ENCODE measurements at regions of chr17 and their contacts with region 1.

Region 1: DNA sequence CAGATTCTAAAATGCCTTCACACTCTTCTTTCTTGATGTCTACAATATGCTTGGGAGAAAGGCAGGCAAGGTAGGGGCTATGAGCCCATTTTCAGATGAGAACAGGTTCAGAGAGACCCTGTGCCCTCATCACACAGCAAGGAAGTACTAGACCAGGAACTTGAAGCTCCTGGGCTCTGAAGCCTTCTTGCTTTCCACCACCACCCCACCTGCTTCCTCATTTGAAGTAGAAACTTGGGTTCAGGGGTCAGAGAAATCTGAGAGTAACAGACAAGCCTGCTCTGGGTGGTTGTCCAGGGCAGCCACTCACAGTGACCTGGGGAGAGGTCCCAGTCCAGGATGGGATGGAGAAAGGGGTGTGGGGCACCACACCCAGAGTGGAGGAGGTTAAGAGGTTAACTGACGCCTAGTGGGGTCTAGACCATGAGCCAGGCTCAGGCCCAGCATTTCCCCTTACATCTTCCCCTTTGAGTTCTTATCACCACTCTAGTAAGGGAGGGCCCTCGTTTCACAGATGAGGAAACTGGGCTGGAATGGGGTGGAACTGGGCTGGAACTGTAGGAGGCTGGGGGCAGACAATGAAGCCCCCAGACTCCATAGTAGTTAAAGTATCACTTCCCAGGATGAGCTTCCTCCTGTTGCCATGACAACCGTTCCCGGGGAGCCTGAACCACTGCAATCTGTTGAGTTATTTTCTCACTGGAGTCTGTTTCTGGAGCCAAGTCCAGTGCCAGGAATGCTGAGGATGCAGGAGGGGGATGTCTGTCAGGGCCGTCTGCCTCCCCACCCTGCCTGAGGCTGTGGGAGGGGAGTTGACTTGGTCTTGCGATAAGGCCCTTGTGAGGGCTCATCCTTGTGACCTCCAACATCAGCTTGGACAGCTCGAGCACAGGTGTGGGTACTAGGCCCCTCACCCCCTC is 16.2 kb upstream of the PHF12 start:
- DNase-seq: no peak
- H3K4me3 ChIP-seq: no peak overlapping the region
- H3K4me3 Mint-ChIP-seq: no peak overlapping the region
- H3K27ac Mint-ChIP-seq: no peak overlapping the region
- H3K4me1 ChIP-seq: peaks cover 8% of the 10 kb centered on the region; the same call in 1 of the 2 replicates
- H3K4me1 Mint-ChIP-seq: peaks cover 7% of the 10 kb centered on the region
- H3K27me3 ChIP-seq: no peaks in the 10 kb centered on the region
- H3K27me3 Mint-ChIP-seq: peaks cover 4% of the 10 kb centered on the region
- CTCF ChIP-seq: no peak

Region 2: GRCh38 chr17:29089601-29090044 is 122.1 kb after region 1 on chr17:
- CTCF ChIA-PET with region 1: interaction called, 24 read pairs
- POLR2A ChIA-PET with region 1: no interaction called
- intact Hi-C with region 1: no loop called
- DNase-seq: no peak
- H3K4me3 ChIP-seq: no peak overlapping the region
- H3K4me3 Mint-ChIP-seq: no peak overlapping the region
- H3K27ac Mint-ChIP-seq: no peak overlapping the region
- H3K4me1 ChIP-seq: no peaks in the 10 kb centered on the region
- H3K4me1 Mint-ChIP-seq: no peaks in the 10 kb centered on the region
- H3K27me3 ChIP-seq: no peaks in the 10 kb centered on the region
- H3K27me3 Mint-ChIP-seq: no peaks in the 10 kb centered on the region
- CTCF ChIP-seq: no peak

Region 3: DNA sequence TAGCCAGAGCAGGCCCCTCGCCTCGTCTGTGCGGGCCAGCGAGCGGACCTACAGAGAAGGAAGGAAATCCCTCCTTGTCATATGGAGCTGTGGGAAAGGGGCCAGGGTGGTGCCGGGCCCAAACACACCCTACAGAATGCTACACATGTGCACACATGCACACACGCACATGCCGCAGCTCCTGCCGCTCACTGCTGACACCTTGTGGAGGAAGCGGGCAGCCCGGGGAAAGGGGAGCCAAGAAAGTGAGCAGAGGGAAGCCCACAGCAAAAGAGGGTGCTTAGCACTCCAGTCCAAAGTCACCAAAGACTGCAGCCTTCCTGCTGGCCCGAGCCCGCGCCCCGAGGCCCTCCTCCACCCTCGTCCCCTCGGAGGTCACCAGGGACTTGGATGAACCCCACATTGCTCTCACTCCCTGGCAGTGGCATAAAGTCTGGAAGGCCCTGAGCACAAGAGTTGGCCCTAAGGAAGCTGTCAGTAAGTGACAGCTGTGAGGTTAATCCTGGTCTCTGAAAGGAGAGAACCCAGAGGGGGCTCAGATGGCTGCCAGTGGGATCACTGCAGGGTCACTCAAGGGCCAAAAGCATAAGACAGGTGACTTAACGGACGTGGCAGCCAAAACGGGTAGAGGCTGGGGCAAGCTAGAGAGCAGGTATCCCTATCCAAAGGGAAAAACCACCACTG is 144.5 kb after region 1 on chr17:
- CTCF ChIA-PET with region 1: interaction called, 261 read pairs
- POLR2A ChIA-PET with region 1: interaction called, 11 read pairs
- intact Hi-C with region 1: loop called (anchors 1 kb)
- DNase-seq: peak; percentile 65 to 84
- H3K4me3 ChIP-seq: no peak overlapping the region
- H3K4me3 Mint-ChIP-seq: no peak overlapping the region
- H3K27ac Mint-ChIP-seq: no peak overlapping the region
- H3K4me1 ChIP-seq: peaks cover 9% of the 10 kb centered on the region
- H3K4me1 Mint-ChIP-seq: no peaks in the 10 kb centered on the region
- H3K27me3 ChIP-seq: no peaks in the 10 kb centered on the region
- H3K27me3 Mint-ChIP-seq: no peaks in the 10 kb centered on the region
- CTCF ChIP-seq: peak; percentile 86 to 98

Region 4: GRCh38 chr17:29116804-29117772 is 149.6 kb after region 1 on chr17:
- CTCF ChIA-PET with region 1: interaction called, 261 read pairs
- POLR2A ChIA-PET with region 1: interaction called, 11 read pairs
- intact Hi-C with region 1: no loop called
- DNase-seq: peak; percentile 71 to 79
- H3K4me3 ChIP-seq: no peak overlapping the region
- H3K4me3 Mint-ChIP-seq: no peak overlapping the region
- H3K27ac Mint-ChIP-seq: peak overlapping the region; percentile 33
- H3K4me1 ChIP-seq: no peaks in the 10 kb centered on the region
- H3K4me1 Mint-ChIP-seq: no peaks in the 10 kb centered on the region
- H3K27me3 ChIP-seq: no peaks in the 10 kb centered on the region
- H3K27me3 Mint-ChIP-seq: no peaks in the 10 kb centered on the region
- CTCF ChIP-seq: peak; percentile 85 to 92

Region 5: GRCh38 chr17:29124117-29124924 is 156.8 kb after region 1 on chr17:
- CTCF ChIA-PET with region 1: interaction called, 19 read pairs
- POLR2A ChIA-PET with region 1: no interaction called
- intact Hi-C with region 1: no loop called
- DNase-seq: peak; percentile 67 to 70
- H3K4me3 ChIP-seq: no peak overlapping the region
- H3K4me3 Mint-ChIP-seq: no peak overlapping the region
- H3K27ac Mint-ChIP-seq: no peak overlapping the region
- H3K4me1 ChIP-seq: no peaks in the 10 kb centered on the region
- H3K4me1 Mint-ChIP-seq: no peaks in the 10 kb centered on the region
- H3K27me3 ChIP-seq: no peaks in the 10 kb centered on the region
- H3K27me3 Mint-ChIP-seq: no peaks in the 10 kb centered on the region
- CTCF ChIP-seq: peak; percentile 65 to 81